Activated CD4-positive, alpha-beta T cell treated with anti-CD3 and anti-CD28 coated beads for 36 hours (primary cell): ENCODE measurements at regions of chr16 and their contacts with region 1.

Region 1: DNA sequence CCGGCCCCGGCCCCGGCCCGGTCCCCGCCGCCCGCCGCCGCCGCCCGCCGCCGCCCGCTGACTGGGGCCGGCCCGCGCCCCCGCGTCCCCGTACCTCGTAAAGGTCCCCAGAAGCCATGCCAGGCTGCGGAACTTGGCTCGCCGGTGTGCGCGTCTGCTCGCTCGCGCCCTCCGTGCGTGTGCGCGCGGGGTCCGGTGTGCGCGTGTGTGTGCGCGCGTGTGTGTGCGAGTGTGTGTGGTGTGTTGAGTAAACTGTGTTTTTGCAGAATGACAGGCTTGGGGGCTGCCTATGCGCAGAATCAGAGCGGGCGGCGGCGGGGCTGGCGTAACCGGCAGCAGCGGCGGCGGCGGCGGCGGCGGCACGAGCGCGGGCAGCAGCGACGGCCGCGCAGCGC is 345 bp downstream of the CDYL2 start:
- DNase-seq: peak; percentile 81
- ATAC-seq: peak; percentile 48
- H3K4me3 Mint-ChIP-seq: peak overlapping the region; percentile 84
- H3K27ac Mint-ChIP-seq: peak overlapping the region; percentile 89
- H3K4me1 Mint-ChIP-seq: peaks cover 32% of the 10 kb centered on the region
- H3K27me3 Mint-ChIP-seq: no peaks in the 10 kb centered on the region

Region 2: DNA sequence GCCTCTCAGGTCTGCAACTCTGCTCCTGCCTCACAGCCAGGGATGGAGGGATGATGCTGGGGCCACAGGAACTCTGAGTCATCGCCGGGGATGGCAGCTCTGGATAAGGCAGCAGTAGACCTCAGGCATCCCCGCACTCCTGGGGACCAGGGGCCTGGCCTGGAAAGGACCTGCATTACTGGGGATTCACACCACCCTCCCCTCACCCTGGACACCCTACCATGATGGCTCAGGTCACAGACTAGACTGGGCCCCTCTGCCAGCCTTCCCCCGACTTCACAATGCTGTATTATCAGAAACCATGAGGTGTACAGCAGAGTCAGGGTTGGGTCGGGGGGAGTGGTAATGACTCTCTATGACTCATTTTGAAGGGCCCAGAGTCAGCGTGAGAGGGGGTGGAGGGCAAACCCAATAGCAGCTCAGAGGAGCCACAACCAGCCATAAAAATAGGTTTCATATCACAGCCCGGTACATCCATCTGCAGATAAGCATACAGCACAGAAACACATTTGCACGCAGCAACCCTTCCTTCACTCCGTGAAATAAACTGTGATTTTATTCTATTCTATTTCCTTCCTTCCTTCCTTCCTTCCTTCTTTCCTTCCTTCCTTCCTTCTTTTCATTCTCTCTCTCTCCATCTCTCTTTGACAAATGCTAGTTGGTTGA is 234.5 kb before region 1 on chr16:
- CTCF ChIA-PET with region 1: no interaction called
- POLR2A ChIA-PET with region 1: interaction called, 3 read pairs
- intact Hi-C with region 1: loop called in 1 of 2 experiments (anchors 5 kb)
- DNase-seq: peak; percentile 90
- ATAC-seq: peak; percentile 98
- H3K4me3 Mint-ChIP-seq: peak overlapping the region; percentile 5
- H3K27ac Mint-ChIP-seq: peak overlapping the region; percentile 81
- H3K4me1 Mint-ChIP-seq: peaks cover 38% of the 10 kb centered on the region
- H3K27me3 Mint-ChIP-seq: peaks cover 4% of the 10 kb centered on the region

Region 3: GRCh38 chr16:80639641-80640040 is 164.4 kb before region 1 on chr16:
- CTCF ChIA-PET with region 1: no interaction called
- POLR2A ChIA-PET with region 1: no interaction called
- intact Hi-C with region 1: no loop called
- DNase-seq: no peak
- ATAC-seq: no peak
- H3K4me3 Mint-ChIP-seq: no peak overlapping the region
- H3K27ac Mint-ChIP-seq: no peak overlapping the region
- H3K4me1 Mint-ChIP-seq: no peaks in the 10 kb centered on the region
- H3K27me3 Mint-ChIP-seq: no peaks in the 10 kb centered on the region

Region 4: DNA sequence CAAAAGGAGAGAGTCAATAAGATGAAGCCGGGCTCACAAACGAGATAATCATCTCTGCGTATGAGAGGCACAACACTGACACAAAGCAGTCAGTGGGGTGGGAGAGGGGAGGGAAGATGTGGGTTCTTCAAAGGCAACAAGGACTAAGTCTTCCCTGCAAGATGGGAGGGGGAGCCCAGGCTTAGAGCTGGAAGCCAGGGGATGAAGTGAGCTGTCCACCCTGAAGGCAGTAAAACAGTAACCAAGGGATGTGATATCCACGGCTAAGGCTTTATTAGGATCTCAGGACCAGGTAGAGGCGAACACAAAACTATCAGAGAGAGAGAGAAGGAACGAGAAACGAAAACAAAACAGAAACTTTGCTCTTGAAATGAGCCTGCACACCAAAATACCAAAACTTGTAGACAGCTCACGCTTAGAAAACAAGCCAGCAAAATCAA is 147.3 kb before region 1 on chr16:
- CTCF ChIA-PET with region 1: no interaction called
- POLR2A ChIA-PET with region 1: no interaction called
- intact Hi-C with region 1: loop called in 1 of 2 experiments (anchors 1 kb)
- DNase-seq: peak; percentile 57
- ATAC-seq: peak; percentile 92
- H3K4me3 Mint-ChIP-seq: peak overlapping the region; percentile 77
- H3K27ac Mint-ChIP-seq: peak overlapping the region; percentile 87
- H3K4me1 Mint-ChIP-seq: peaks cover 27% of the 10 kb centered on the region
- H3K27me3 Mint-ChIP-seq: no peaks in the 10 kb centered on the region

Region 5: GRCh38 chr16:80671281-80671849 is 132.7 kb before region 1 on chr16:
- CTCF ChIA-PET with region 1: no interaction called
- POLR2A ChIA-PET with region 1: no interaction called
- intact Hi-C with region 1: loop called in 1 of 2 experiments (anchors 5 kb)
- DNase-seq: no peak
- ATAC-seq: no peak
- H3K4me3 Mint-ChIP-seq: no peak overlapping the region
- H3K27ac Mint-ChIP-seq: no peak overlapping the region
- H3K4me1 Mint-ChIP-seq: peaks cover 19% of the 10 kb centered on the region
- H3K27me3 Mint-ChIP-seq: no peaks in the 10 kb centered on the region

Region 6: DNA sequence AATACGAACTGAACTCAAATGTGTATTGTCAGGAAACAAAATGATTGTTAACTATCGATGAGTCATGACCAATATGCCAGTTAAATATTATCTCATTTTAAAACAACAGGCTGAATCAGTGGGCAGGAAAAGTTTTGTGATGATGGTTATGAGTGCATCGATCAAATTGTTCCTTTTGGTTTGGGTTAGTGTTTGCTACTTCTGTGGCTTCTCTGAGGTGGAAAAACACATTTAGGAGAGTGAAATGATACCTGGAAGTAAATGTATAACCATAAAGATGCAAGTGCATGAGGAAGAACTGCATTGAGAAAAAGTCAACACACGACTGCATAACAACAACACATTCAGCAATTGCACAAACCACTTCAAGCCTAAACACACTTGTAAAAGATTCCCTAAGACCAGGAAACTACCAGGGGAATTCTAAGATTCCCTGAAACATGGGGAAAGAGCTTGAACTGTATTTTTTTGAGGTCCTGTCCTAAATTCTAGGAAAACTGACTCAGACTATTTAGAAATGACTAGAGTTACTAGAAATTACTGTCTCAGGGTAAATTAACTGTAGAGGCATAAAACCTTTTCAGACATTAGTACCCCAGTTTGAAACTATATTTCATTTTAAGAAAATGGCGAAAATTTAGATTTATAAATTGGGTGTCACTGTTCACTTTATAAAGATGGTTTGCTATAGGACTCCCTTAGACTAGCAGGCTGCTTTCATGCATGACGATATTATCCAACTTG is 44.5 kb before region 1 on chr16:
- CTCF ChIA-PET with region 1: no interaction called
- POLR2A ChIA-PET with region 1: interaction called, 4 read pairs
- intact Hi-C with region 1: loop called (anchors 2 kb)
- DNase-seq: no peak
- ATAC-seq: peak; percentile 76
- H3K4me3 Mint-ChIP-seq: no peak overlapping the region
- H3K27ac Mint-ChIP-seq: peak overlapping the region; percentile 65
- H3K4me1 Mint-ChIP-seq: peaks cover 15% of the 10 kb centered on the region
- H3K27me3 Mint-ChIP-seq: no peaks in the 10 kb centered on the region

Region 7: DNA sequence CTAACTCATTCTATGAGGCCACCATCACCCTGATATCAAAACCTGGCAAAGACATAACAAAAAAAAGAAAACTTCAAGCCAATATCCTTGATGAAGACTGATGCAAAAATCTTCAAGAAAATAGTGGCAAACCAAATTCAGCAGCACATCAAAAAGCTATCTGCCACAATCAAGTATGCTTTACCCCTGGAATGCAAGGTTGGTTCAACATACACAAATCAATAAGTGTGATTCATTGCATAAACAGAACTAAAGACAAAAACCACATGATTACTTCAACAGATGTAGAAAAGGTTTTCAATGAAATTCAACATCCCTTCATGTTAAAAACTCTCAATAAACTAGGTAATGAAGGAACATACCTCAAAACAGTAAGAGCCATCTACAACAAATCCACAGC is 154.2 kb after region 1 on chr16:
- CTCF ChIA-PET with region 1: no interaction called
- POLR2A ChIA-PET with region 1: no interaction called
- intact Hi-C with region 1: no loop called
- DNase-seq: no peak
- ATAC-seq: no peak
- H3K4me3 Mint-ChIP-seq: no peak overlapping the region
- H3K27ac Mint-ChIP-seq: no peak overlapping the region
- H3K4me1 Mint-ChIP-seq: no peaks in the 10 kb centered on the region
- H3K27me3 Mint-ChIP-seq: no peaks in the 10 kb centered on the region